Activated CD4-positive, alpha-beta memory T cell treated with anti-CD3 and anti-CD28 coated beads, Interleukin-2, amount 10 ng/mL, durations not matched to agents 7 days and 5 days (primary cell): ENCODE measurements at regions of chr9 and their contacts with region 1.

Region 1: GRCh38 chr9:137240861-137241489 is at the start of gene TUBB4B:
- DNase-seq: peak; percentile 99
- H3K4me3 Mint-ChIP-seq: peak within 1 kb of the TSS; percentile 88
- H3K27ac Mint-ChIP-seq: peak within 1 kb of the TSS; percentile 94
- H3K4me1 Mint-ChIP-seq: peaks cover 47% of the 10 kb centered on the region
- H3K27me3 Mint-ChIP-seq: no peaks in the 10 kb centered on the region
- total RNA-seq, gene TUBB4B: 314 to 319 TPM

Region 2: GRCh38 chr9:137070201-137070905 is 170.6 kb before region 1 on chr9 and contains the start of gene SAPCD2:
- CTCF ChIA-PET with region 1: interaction called, 6 read pairs
- POLR2A ChIA-PET with region 1: interaction called, 13 read pairs
- DNase-seq: peak; percentile 90
- H3K4me3 Mint-ChIP-seq: peak within 1 kb of the TSS; percentile 73
- H3K27ac Mint-ChIP-seq: peak within 1 kb of the TSS; percentile 63
- H3K4me1 Mint-ChIP-seq: peaks cover 37% of the 10 kb centered on the region
- H3K27me3 Mint-ChIP-seq: no peaks in the 10 kb centered on the region
- total RNA-seq, gene SAPCD2: 26.8 to 27.0 TPM

Region 3: DNA sequence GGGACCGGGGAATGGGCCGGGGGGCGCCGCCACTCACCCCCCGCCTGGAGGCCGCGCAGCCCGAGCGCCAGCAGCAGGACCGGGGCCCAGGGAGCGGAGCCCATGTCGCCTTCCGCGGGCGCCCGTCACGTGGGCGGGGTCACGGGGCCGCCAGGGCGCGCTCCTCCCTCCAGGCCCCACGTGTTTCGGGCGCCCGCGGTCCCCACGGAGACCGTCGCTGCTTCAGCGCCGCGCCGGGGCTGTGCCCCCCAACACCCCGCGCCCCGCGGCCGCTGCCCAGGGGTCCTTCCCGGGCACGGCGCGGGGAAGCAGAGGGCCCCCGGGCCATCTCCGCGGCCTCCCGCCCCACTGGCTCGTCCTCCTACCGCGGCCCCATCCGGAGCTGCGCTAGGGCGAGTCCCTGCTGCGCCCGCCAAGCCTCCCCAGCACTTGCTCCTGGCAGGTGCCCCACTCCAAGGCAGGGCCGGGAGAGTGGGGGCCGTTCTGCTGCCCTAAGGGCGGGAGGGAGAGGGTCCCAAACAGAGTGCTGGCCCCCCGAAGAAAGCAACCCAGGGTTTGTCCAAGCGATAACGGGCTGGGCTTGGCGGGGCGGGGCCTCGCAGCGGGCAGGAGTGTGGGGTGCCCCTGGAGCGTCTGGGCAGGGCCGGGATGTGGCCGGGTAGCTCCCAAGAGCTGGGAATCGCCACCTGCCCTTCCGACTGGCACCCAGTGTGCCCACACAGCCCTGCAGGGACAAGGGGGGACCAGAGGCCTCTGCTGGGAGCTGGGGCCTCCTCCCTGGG is 126.2 kb before region 1 on chr9 and contains the start of gene DPP7:
- CTCF ChIA-PET with region 1: interaction called, 10 read pairs
- POLR2A ChIA-PET with region 1: interaction called, 39 read pairs
- DNase-seq: peak; percentile 84
- H3K4me3 Mint-ChIP-seq: peak within 1 kb of the TSS; percentile 69
- H3K27ac Mint-ChIP-seq: peak within 1 kb of the TSS; percentile 56
- H3K4me1 Mint-ChIP-seq: peaks cover 5% of the 10 kb centered on the region
- H3K27me3 Mint-ChIP-seq: no peaks in the 10 kb centered on the region
- total RNA-seq, gene DPP7: 253 to 257 TPM

Region 4: DNA sequence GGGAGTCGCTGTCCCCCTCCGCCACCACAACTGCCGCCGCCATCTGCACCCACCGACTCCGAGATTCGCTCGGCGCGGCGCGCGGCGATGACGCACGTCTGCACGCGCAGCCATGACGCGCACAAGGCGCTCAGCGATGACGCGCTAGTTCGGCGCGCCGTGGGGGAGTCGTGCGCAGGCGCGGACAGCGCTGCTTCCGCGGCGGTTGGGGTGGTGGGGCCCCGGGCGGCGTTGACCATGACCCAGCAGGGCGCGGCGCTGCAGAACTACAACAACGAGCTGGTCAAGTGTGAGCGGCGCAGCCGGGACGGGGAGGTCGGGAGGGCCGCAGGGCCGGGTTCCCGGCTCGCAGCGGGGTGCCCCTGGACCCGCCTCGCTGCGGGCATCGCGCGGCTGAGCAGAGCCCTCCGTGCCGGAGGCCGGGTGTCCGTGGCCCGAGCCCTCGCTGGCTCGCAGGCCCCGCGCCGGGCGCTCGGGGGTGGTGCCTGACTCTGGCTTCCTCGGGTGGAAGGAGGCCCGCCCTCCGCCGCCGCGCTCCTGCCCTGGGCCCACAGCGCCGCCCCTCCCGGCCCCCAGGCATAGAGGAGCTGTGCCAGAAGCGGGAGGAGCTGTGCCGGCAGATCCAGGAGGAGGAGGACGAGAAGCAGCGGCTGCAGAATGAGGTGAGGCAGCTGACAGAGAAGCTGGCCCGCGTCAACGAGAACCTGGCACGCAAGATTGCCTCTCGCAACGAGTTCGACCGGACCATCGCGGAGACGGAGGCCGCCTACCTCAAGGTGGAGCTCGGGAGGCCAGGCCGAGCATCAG is 52.3 kb before region 1 on chr9 and contains the starts of genes ANAPC2 and SSNA1:
- CTCF ChIA-PET with region 1: interaction called, 5 read pairs
- POLR2A ChIA-PET with region 1: interaction called, 17 read pairs
- DNase-seq: peak; percentile 94
- H3K4me3 Mint-ChIP-seq: peak within 1 kb of the TSS; percentile 93
- H3K27ac Mint-ChIP-seq: peak within 1 kb of the TSS; percentile 97
- H3K4me1 Mint-ChIP-seq: peaks cover 40% of the 10 kb centered on the region
- H3K27me3 Mint-ChIP-seq: no peaks in the 10 kb centered on the region
- total RNA-seq, gene ANAPC2: 53.3 to 57.8 TPM
- total RNA-seq, gene SSNA1: 70.0 to 76.3 TPM

Region 5: GRCh38 chr9:137228506-137228967 is 12.4 kb before region 1 on chr9:
- CTCF ChIA-PET with region 1: interaction called, 18 read pairs
- POLR2A ChIA-PET with region 1: interaction called, 63 read pairs
- DNase-seq: no peak
- H3K4me3 Mint-ChIP-seq: no peak overlapping the region
- H3K27ac Mint-ChIP-seq: no peak overlapping the region
- H3K4me1 Mint-ChIP-seq: peaks cover 21% of the 10 kb centered on the region
- H3K27me3 Mint-ChIP-seq: no peaks in the 10 kb centered on the region

Region 6: GRCh38 chr9:137319011-137319738 is 78.2 kb after region 1 on chr9:
- CTCF ChIA-PET with region 1: no interaction called
- POLR2A ChIA-PET with region 1: interaction called, 13 read pairs
- DNase-seq: no peak
- H3K4me3 Mint-ChIP-seq: no peak overlapping the region
- H3K27ac Mint-ChIP-seq: no peak overlapping the region
- H3K4me1 Mint-ChIP-seq: peaks cover 10% of the 10 kb centered on the region
- H3K27me3 Mint-ChIP-seq: no peaks in the 10 kb centered on the region